A673 (cell line): ENCODE measurements at regions of chr4 and their contacts with region 1.

Region 1: DNA sequence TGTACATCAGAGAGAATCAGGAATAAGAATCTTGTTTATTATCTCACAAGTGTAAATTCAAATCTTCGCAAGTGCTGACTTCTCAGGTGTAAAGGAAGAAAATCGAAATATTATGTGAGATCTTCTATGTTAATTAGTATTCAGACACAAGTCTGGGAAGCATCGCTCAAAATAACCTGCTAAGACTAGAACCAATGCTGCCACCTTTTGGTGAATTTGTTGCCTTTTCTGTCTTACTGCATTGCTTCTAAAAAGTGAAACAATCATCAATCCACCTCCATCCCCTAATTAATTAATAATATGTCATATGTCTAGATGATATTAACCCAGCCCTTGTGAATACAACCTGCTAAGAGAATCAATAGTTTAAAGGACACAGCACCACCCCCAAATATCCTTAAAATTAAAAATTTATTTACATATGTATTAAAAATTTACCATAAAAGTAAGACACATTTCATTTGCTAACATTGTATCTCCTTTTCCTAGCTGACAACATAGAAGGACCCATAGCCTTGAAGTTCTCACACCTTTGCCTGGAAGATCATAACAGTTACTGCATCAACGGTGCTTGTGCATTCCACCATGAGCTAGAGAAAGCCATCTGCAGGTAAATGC is 3.5 kb downstream of the EPGN start:
- DNase-seq: peak; percentile 58
- H3K4me3 ChIP-seq: no peak overlapping the region
- H3K27ac ChIP-seq: no peak overlapping the region
- H3K4me1 ChIP-seq: peaks cover 19% of the 10 kb centered on the region
- H3K27me3 ChIP-seq: no peaks in the 10 kb centered on the region
- CTCF ChIP-seq: peak; percentile 57

Region 2: GRCh38 chr4:74189331-74190043 is 122.3 kb before region 1 on chr4:
- CTCF ChIA-PET with region 1: interaction called, 3 read pairs
- POLR2A ChIA-PET with region 1: no interaction called
- intact Hi-C with region 1: loop called (anchors 1 kb)
- DNase-seq: peak; percentile 52
- H3K4me3 ChIP-seq: no peak overlapping the region
- H3K27ac ChIP-seq: no peak overlapping the region
- H3K4me1 ChIP-seq: no peaks in the 10 kb centered on the region
- H3K27me3 ChIP-seq: no peaks in the 10 kb centered on the region
- CTCF ChIP-seq: peak; percentile 61

Region 3: DNA sequence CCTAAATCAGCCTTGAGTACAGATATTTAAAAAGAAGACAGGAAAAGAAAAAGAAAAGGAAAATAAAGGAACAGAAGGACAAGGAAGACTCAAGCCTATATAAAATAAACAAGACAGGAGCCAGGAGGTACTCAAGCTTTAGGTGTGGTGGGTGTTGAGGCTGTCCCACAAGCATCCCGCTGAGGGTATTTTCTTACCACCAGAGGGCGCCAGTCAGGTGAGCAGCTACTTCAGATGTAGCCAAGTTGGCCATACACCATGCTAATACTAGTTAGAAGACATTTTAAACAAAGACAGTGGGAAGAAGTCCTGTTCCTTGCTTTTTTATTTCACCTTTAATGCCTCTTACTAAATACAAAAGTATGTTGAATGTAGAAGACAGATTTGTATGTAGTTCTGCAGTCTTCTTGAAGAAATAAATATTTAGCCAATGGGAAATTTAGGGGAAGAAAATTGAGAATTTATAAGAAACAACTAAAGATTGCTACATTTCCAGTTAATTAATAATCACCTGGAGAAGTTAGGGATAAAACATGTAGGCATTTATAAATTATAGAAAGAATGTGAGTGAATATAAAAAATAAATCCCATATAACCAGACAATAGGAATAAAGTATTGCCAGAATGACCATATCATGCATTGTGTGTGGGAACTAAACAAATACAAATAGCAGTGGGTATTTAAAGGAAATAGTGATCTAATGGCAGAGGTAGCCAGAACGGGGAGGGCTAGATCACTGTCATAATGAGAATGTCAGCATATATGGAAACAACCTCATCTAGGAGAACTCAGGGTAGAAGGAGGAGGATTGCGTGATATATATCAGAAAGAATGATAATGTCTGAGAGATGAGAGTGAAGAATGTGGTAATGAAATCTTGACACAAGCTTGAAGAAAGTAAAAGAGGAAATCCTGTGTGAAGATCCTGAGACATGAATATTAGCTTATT is 82.8 kb before region 1 on chr4:
- CTCF ChIA-PET with region 1: no interaction called
- POLR2A ChIA-PET with region 1: no interaction called
- intact Hi-C with region 1: loop called (anchors 1 kb)
- DNase-seq: peak; percentile 70
- H3K4me3 ChIP-seq: no peak overlapping the region
- H3K27ac ChIP-seq: no peak overlapping the region
- H3K4me1 ChIP-seq: peaks cover 9% of the 10 kb centered on the region
- H3K27me3 ChIP-seq: no peaks in the 10 kb centered on the region
- CTCF ChIP-seq: peak; percentile 74

Region 4: DNA sequence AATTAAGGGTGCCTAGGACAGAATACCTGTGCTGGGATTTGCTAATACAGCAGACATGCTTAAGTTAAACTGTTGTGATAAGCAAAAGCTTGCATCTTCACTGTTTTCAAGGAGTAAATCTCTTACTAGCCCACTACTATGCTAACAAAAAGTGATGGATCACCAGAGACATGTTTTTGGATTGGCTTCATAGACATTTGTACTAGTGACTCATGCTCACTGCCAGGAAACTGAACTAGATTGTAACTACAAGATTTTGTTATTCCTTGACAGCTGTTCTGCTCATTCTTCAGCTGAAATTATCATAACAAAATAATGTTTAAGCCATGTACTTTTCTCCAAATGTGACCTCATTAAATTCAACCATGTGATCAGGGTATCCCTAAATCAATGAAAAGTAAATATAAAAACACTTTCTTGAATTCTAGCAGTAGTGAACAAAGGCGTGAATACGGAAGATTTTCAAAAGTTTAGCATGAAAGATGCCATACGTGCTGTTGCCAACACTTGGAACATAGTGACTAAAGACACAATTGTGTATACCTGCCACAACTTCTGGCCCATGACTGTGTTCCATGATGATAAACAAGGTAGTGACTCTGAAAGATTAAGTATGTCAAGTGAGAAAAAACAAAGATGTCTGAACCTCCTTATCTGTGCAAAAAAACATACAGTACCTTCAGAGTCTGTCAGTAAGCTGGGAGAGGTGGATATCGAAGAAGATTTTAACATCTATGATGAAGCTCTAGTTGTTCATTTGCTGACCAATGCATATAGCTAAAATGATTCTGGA is 328.5 kb after region 1 on chr4:
- CTCF ChIA-PET with region 1: no interaction called
- POLR2A ChIA-PET with region 1: no interaction called
- intact Hi-C with region 1: no loop called
- DNase-seq: no peak
- H3K4me3 ChIP-seq: no peak overlapping the region
- H3K27ac ChIP-seq: no peak overlapping the region
- H3K4me1 ChIP-seq: no peaks in the 10 kb centered on the region
- H3K27me3 ChIP-seq: no peaks in the 10 kb centered on the region
- CTCF ChIP-seq: no peak

Region 5: GRCh38 chr4:74897386-74897785 is 585.6 kb after region 1 on chr4:
- CTCF ChIA-PET with region 1: no interaction called
- POLR2A ChIA-PET with region 1: no interaction called
- intact Hi-C with region 1: no loop called
- DNase-seq: no peak
- H3K4me3 ChIP-seq: no peak overlapping the region
- H3K27ac ChIP-seq: no peak overlapping the region
- H3K4me1 ChIP-seq: no peaks in the 10 kb centered on the region
- H3K27me3 ChIP-seq: no peaks in the 10 kb centered on the region
- CTCF ChIP-seq: no peak

Region 6: DNA sequence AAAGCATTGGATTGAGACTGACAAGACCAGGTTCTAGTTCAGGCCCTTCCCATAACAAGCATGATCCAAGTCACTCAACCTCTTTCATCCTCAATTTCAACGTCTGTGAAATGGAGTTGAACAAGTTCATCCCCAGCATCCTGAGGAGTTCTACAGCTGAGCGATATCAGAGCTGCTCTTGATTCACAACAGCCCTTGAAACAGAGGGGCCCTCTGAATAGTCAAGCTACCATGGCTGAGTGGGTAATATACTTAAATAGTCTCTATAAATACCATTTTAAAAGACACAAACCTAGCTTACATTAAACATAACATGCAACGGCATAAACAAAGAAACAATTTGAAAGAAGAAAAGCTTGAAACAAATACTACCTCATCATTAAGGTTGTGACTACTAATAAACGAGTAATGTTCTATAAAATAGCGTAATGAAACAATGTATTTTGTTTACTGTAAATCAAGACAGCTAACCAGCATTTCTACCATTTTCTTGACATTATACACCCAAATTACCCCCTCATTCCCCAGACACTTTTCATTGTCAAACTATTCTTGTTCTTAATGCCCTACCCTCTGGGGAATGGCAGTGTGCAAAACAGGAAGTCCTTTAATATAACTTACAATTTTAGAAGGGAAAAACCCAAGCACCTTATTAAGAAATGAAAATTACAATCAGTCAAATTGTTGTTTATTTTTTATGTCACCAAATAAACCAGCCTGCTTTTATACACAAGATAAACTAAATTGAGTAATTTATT is 823.4 kb after region 1 on chr4:
- CTCF ChIA-PET with region 1: no interaction called
- POLR2A ChIA-PET with region 1: no interaction called
- intact Hi-C with region 1: no loop called
- DNase-seq: peak; percentile 7
- H3K4me3 ChIP-seq: no peak overlapping the region
- H3K27ac ChIP-seq: no peak overlapping the region
- H3K4me1 ChIP-seq: no peaks in the 10 kb centered on the region
- H3K27me3 ChIP-seq: no peaks in the 10 kb centered on the region
- CTCF ChIP-seq: no peak